ENCODE measurements at regions of chr9 and their contacts with region 1.

Region 1: DNA sequence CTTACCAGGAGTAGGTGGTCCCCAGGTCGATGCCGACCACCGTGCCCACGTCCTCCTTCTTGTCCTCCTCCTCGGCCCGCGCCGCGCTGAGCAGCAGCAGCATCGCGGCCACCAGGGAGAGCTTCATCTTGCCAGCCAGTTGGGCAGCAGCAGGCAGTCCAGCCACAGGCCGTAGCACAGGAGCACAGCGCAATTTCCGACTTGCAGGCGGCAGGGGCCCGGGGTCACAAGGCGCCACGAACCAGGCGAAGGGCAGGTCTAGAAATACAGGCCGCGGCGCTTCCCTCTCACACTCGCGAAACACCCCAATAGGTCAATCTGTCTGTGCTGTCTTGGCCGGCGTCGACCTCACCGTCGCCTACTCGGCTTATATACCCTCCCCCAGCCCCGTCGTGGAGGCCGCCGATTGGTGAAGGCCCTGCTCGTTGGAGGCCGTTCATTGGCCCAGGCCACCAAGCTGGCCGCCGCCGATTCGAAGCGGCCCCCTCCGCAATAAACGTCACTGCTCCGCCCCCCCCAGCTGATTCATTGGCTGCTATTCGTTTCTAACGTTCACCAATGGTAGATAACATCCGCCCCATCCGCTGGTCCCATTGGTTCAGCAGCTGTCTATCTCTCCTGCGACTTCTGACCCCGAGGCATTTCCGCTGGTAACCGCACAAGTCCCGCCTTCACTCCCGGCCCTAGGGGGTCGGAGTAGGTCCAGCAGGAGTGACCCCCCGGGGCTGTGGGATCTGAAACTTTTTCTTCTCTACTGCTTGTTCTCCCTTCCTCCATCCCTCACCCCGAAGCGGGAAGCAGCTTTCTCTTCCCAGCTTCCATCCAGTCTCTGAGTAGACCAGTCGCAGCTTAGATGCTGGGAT is at the start of gene HSPA5:
- DNase-seq: peak; percentile 95
- ATAC-seq: peak; percentile 94
- H3K4me3 Mint-ChIP-seq: peak within 1 kb of the TSS; percentile 99
- H3K27ac Mint-ChIP-seq: peak within 1 kb of the TSS; percentile 99
- H3K4me1 Mint-ChIP-seq: peaks cover 30% of the 10 kb centered on the region
- H3K27me3 Mint-ChIP-seq: no peaks in the 10 kb centered on the region
- total RNA-seq, gene HSPA5: 77.4 to 81.3 TPM

Region 2: GRCh38 chr9:124868511-124869465 is 372.4 kb before region 1 on chr9:
- POLR2A ChIA-PET with region 1: interaction called, 13 read pairs
- DNase-seq: peak; percentile 97
- ATAC-seq: peak; percentile 72
- H3K4me3 Mint-ChIP-seq: peak overlapping the region; percentile 98
- H3K27ac Mint-ChIP-seq: peak overlapping the region; percentile 98
- H3K4me1 Mint-ChIP-seq: peaks cover 38% of the 10 kb centered on the region
- H3K27me3 Mint-ChIP-seq: no peaks in the 10 kb centered on the region

Region 3: GRCh38 chr9:125200210-125201047 is 40.8 kb before region 1 on chr9 and contains the start of gene RABEPK:
- POLR2A ChIA-PET with region 1: interaction called, 21 read pairs
- DNase-seq: peak; percentile 97
- ATAC-seq: peak; percentile 97
- H3K4me3 Mint-ChIP-seq: peak within 1 kb of the TSS; percentile 91
- H3K27ac Mint-ChIP-seq: peak within 1 kb of the TSS; percentile 85
- H3K4me1 Mint-ChIP-seq: peaks cover 15% of the 10 kb centered on the region
- H3K27me3 Mint-ChIP-seq: peaks cover 4% of the 10 kb centered on the region
- total RNA-seq, gene RABEPK: 9.9 to 12.3 TPM

Region 4: GRCh38 chr9:125214186-125214585 is 27.0 kb before region 1 on chr9:
- POLR2A ChIA-PET with region 1: no interaction called
- DNase-seq: no peak
- ATAC-seq: no peak
- H3K4me3 Mint-ChIP-seq: no peak overlapping the region
- H3K27ac Mint-ChIP-seq: no peak overlapping the region
- H3K4me1 Mint-ChIP-seq: no peaks in the 10 kb centered on the region
- H3K27me3 Mint-ChIP-seq: no peaks in the 10 kb centered on the region

Region 5: GRCh38 chr9:125261501-125262293 is 20.5 kb after region 1 on chr9 and contains the start of gene GAPVD1:
- POLR2A ChIA-PET with region 1: interaction called, 73 read pairs
- DNase-seq: peak; percentile 94
- ATAC-seq: peak; percentile 98
- H3K4me3 Mint-ChIP-seq: peak within 1 kb of the TSS; percentile 97
- H3K27ac Mint-ChIP-seq: peak within 1 kb of the TSS; percentile 94
- H3K4me1 Mint-ChIP-seq: peaks cover 31% of the 10 kb centered on the region
- H3K27me3 Mint-ChIP-seq: no peaks in the 10 kb centered on the region
- total RNA-seq, gene GAPVD1: 57.8 to 58.7 TPM

Region 6: DNA sequence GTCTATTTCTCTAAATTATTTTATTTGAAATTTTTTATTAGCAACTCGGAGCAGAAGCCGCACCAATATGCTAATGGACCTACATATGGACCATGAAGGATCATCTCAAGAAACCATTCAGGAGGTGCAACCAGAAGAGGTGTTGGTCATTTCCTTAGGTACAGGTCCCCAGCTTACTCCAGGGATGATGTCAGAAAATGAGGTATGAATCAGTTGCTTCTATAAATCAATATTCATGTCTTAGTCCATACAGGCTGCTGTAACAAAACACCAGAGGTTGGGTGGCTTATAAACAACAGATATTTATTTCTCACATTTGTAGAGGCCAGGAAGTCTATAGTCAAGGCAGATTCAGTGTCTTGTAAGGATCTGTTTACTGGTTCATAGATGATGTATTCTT is 71.2 kb after region 1 on chr9:
- POLR2A ChIA-PET with region 1: no interaction called
- DNase-seq: no peak
- ATAC-seq: no peak
- H3K4me3 Mint-ChIP-seq: no peak overlapping the region
- H3K27ac Mint-ChIP-seq: no peak overlapping the region
- H3K4me1 Mint-ChIP-seq: no peaks in the 10 kb centered on the region
- H3K27me3 Mint-ChIP-seq: no peaks in the 10 kb centered on the region